WTC11 (cell line): ENCODE measurements at regions of chr19 and their contacts with region 1.

Region 1: DNA sequence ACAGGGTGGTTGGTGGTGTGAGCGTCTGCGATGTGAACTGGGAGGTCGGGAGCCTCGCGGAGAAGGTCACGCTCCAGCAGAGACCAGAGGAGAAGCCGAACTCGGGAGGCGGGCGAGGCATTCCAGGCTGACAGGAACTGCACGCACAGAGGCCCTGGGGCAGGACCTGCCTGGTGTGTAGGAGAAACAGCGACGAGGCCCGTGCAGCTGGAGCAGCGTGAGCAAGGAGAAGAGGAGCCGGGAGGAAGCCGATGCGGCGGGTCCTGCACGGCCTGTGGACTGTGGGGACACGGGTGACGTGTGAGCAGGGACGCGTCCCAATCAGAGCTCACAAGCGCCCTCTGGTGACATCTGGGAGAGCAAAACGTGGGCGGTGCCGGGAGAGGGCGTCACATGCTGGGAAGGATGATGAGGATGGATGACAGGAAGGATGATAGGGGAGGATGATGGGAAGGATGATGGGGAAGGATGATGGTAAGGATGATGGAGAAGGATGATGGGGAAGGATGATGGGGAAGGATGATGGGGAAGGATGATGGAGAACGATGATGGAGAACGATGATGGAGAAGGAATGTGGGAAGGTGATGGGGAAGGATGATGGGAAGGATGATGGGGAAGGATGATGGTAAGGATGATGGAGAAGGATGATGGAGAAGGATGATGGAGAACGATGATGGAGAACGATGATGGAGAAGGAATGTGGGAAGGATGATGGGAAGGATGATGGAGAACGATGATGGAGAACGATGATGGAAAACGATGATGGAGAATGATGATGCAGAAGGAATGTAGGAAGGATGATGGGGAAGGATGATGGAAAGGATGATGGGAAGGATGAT is 16.1 kb upstream of the MADCAM1 start:
- DNase-seq: peak; percentile 81
- ATAC-seq: peak; percentile 75
- H3K4me3 Mint-ChIP-seq: no peak overlapping the region
- H3K27ac Mint-ChIP-seq: no peak overlapping the region
- H3K4me1 Mint-ChIP-seq: no peaks in the 10 kb centered on the region; the same call in 1 of the 2 replicates
- H3K27me3 Mint-ChIP-seq: peaks cover 14% of the 10 kb centered on the region; the same call in 1 of the 2 replicates
- CTCF ChIP-seq: peak; percentile 58

Region 2: GRCh38 chr19:383922-384798 is 96.1 kb before region 1 on chr19:
- CTCF ChIA-PET with region 1: interaction called, 11 read pairs
- POLR2A ChIA-PET with region 1: no interaction called
- DNase-seq: peak; percentile 83
- ATAC-seq: peak; percentile 98
- H3K4me3 Mint-ChIP-seq: no peak overlapping the region
- H3K27ac Mint-ChIP-seq: no peak overlapping the region
- H3K4me1 Mint-ChIP-seq: peaks cover 28% of the 10 kb centered on the region
- H3K27me3 Mint-ChIP-seq: peaks cover 17% of the 10 kb centered on the region
- CTCF ChIP-seq: peak; percentile 68

Region 3: GRCh38 chr19:408898-409515 is 71.2 kb before region 1 on chr19 and contains the start of gene C2CD4C:
- CTCF ChIA-PET with region 1: interaction called, 15 read pairs
- POLR2A ChIA-PET with region 1: no interaction called
- DNase-seq: no peak
- ATAC-seq: peak; percentile 6; the same call in 1 of the 2 replicates
- H3K4me3 Mint-ChIP-seq: peak within 1 kb of the TSS; percentile 81
- H3K27ac Mint-ChIP-seq: peak within 1 kb of the TSS; percentile 30; the same call in 1 of the 2 replicates
- H3K4me1 Mint-ChIP-seq: peaks cover 10% of the 10 kb centered on the region
- H3K27me3 Mint-ChIP-seq: peaks cover 11% of the 10 kb centered on the region
- CTCF ChIP-seq: no peak
- total RNA-seq, gene C2CD4C: 6.6 to 9.8 TPM (median 7.9 TPM) in 3 replicates

Region 4: DNA sequence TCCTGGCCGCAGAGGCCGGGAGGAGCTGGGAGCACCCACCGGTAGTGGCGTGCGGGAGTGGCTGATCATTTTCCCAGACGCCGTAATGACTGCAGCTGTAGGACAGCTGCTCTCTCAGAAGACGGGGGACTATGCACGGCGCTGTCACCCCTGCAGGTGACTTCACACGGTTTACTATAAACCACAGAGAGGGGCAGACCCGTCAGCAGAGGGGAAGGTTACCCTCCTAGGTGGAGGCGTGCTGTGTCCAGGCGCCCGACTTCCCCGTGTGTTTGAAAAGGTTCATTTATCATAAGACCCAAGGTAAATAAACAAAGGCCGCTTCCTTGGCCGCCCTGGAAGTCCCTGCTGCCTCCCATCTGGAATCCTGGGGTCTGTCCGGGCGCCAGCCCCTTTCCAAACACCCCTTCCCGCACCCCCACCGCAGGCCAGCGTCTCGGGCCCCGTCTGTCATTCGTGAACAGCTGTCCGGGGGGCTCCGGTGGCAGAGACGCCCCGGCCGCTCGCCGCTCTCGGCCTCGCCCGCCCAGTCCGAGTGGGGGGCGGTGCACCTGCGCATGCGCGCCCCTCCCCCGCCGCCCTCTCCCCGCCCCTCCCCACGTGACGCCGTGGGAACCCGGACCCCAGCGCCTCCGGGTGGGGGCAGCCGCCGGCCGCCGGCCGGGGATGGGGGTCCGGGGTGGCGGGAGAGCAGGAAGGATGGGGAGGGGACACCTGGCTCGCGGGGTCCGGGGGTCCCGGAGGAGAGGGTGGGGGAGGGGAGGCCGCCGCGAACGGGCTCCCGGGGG is 20.3 kb before region 1 on chr19:
- CTCF ChIA-PET with region 1: interaction called, 14 read pairs
- POLR2A ChIA-PET with region 1: no interaction called
- DNase-seq: peak; percentile 60
- ATAC-seq: peak; percentile 17
- H3K4me3 Mint-ChIP-seq: peak overlapping the region; percentile 73
- H3K27ac Mint-ChIP-seq: no peak overlapping the region
- H3K4me1 Mint-ChIP-seq: peaks cover 6% of the 10 kb centered on the region; the same call in 1 of the 2 replicates
- H3K27me3 Mint-ChIP-seq: peaks cover 35% of the 10 kb centered on the region
- CTCF ChIP-seq: no peak

Region 5: DNA sequence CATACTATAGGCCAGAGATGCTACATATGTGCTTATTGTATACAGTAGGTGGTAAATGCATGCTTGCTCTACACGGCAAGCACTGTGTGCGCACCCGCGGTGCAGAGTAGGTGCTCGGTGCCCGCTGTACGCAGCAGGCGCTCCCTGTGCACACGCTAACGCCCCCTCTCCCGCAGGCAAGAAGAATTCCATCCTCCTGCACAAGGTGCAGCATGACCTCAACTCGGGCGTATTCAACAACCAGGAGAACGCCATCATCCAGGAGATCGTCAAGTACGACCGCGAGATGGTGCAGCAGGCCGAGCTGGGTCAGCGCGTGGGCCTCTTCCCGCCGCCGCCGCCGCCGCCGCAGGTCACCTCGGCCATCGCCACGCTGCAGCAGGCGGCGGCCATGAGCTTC is 135.4 kb after region 1 on chr19:
- CTCF ChIA-PET with region 1: no interaction called
- POLR2A ChIA-PET with region 1: no interaction called
- DNase-seq: no peak
- ATAC-seq: peak; percentile 13; the same call in 1 of the 2 replicates
- H3K4me3 Mint-ChIP-seq: peak overlapping the region; percentile 54
- H3K27ac Mint-ChIP-seq: no peak overlapping the region
- H3K4me1 Mint-ChIP-seq: peaks cover 3% of the 10 kb centered on the region; the same call in 1 of the 2 replicates
- H3K27me3 Mint-ChIP-seq: no peaks in the 10 kb centered on the region
- CTCF ChIP-seq: no peak